Panc1 (cell line): ENCODE measurements at regions of chr3 and their contacts with region 1.

Region 1: DNA sequence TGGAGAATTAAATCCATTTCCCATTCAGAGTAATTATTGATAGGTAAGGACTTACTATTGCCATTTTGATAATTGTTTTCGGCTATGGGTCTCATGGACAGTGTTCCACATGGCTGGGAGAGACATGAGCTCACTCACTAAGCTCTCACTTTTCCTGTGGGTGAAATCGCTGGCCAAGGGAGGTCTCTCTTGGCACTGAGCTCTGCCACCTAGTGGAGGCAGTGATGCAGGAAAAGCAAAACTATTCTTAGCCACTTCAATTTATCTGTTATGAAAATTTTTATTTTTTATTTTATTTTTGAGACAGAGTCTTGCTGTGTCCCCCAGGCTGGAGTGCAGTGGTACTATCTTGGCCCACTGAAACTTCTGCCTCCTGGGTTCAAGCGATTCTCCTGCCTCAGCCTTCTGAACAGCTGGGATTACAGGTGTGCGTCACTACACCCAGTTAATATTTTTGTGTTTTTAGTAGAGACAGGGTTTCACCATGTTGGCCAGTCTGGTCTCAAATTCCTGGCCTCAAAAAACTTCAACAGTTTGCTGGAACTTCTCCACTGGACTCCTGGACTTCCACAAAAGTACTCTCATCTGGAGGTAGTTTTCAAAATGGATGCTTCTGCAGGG is 4.7 kb upstream of the RNF13 start:
- DNase-seq: peak; percentile 71
- ATAC-seq: peak; percentile 59
- H3K4me3 ChIP-seq: no peak overlapping the region
- H3K27ac ChIP-seq: no peak overlapping the region
- H3K4me1 ChIP-seq: peaks cover 12% of the 10 kb centered on the region
- H3K27me3 ChIP-seq: no peaks in the 10 kb centered on the region
- CTCF ChIP-seq: peak; percentile 97

Region 2: DNA sequence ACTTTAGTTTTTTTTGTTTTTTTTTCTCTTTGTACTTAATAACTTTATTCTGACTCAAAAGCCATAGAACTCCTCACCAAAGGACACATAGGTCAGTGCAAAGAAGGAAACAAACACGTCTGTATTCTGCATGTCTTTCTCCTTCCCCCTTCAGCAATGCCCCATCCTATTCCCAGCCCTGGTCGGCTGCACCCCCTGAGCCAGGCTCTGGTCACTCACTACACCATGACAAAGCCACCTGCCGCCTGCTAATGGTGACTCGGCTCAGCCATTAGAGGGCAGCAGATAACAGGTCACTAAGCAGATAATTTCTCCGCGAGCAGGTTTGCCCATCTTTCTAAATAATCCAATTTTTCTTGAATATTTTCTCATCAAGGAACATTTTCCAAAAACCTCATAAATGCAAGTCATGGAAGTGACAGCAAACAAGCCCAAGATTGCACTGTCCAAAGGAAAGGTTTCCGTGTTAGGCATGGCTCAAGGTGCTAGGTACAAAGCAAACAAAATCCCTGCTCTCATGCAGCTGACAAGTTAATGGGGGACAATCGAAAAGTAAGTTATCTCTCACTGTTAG is 296.0 kb before region 1 on chr3:
- CTCF ChIA-PET with region 1: interaction called, 3 read pairs
- POLR2A ChIA-PET with region 1: no interaction called
- in situ Hi-C with region 1: no loop called
- intact Hi-C with region 1: loop called (anchors 5 kb)
- DNase-seq: no peak
- ATAC-seq: peak; percentile 69
- H3K4me3 ChIP-seq: no peak overlapping the region
- H3K27ac ChIP-seq: peak overlapping the region; percentile 98
- H3K4me1 ChIP-seq: peaks cover 78% of the 10 kb centered on the region
- H3K27me3 ChIP-seq: no peaks in the 10 kb centered on the region
- CTCF ChIP-seq: peak; percentile 96

Region 3: GRCh38 chr3:149589332-149589731 is 219.0 kb before region 1 on chr3:
- CTCF ChIA-PET with region 1: interaction called, 11 read pairs
- POLR2A ChIA-PET with region 1: no interaction called
- in situ Hi-C with region 1: no loop called
- intact Hi-C with region 1: no loop called
- DNase-seq: no peak
- ATAC-seq: no peak
- H3K4me3 ChIP-seq: no peak overlapping the region
- H3K27ac ChIP-seq: peak overlapping the region; percentile 100
- H3K4me1 ChIP-seq: peaks cover 100% of the 10 kb centered on the region
- H3K27me3 ChIP-seq: no peaks in the 10 kb centered on the region
- CTCF ChIP-seq: no peak

Region 4: GRCh38 chr3:149646181-149646766 is 162.0 kb before region 1 on chr3:
- CTCF ChIA-PET with region 1: no interaction called
- POLR2A ChIA-PET with region 1: interaction called, 12 read pairs
- in situ Hi-C with region 1: no loop called
- intact Hi-C with region 1: no loop called
- DNase-seq: no peak
- ATAC-seq: peak; percentile 44; the same call in 1 of the 2 replicates
- H3K4me3 ChIP-seq: no peak overlapping the region
- H3K27ac ChIP-seq: peak overlapping the region; percentile 67
- H3K4me1 ChIP-seq: peaks cover 96% of the 10 kb centered on the region
- H3K27me3 ChIP-seq: no peaks in the 10 kb centered on the region
- CTCF ChIP-seq: no peak

Region 5: GRCh38 chr3:149765762-149766334 is 42.5 kb before region 1 on chr3:
- CTCF ChIA-PET with region 1: interaction called, 30 read pairs
- POLR2A ChIA-PET with region 1: interaction called, 5 read pairs
- in situ Hi-C with region 1: no loop called
- intact Hi-C with region 1: loop called (anchors 5 kb)
- DNase-seq: no peak
- ATAC-seq: peak; percentile 70; the same call in 1 of the 2 replicates
- H3K4me3 ChIP-seq: no peak overlapping the region
- H3K27ac ChIP-seq: no peak overlapping the region
- H3K4me1 ChIP-seq: no peaks in the 10 kb centered on the region
- H3K27me3 ChIP-seq: peaks cover 3% of the 10 kb centered on the region; the same call in 1 of the 2 replicates
- CTCF ChIP-seq: peak; percentile 66; the same call in 1 of the 2 replicates

Region 6: GRCh38 chr3:149771652-149772271 is 36.6 kb before region 1 on chr3:
- CTCF ChIA-PET with region 1: interaction called, 30 read pairs
- POLR2A ChIA-PET with region 1: interaction called, 5 read pairs
- in situ Hi-C with region 1: no loop called
- intact Hi-C with region 1: loop called (anchors 5 kb)
- DNase-seq: peak; percentile 32
- ATAC-seq: peak; percentile 89
- H3K4me3 ChIP-seq: no peak overlapping the region
- H3K27ac ChIP-seq: no peak overlapping the region
- H3K4me1 ChIP-seq: no peaks in the 10 kb centered on the region
- H3K27me3 ChIP-seq: no peaks in the 10 kb centered on the region
- CTCF ChIP-seq: peak; percentile 97

Region 7: DNA sequence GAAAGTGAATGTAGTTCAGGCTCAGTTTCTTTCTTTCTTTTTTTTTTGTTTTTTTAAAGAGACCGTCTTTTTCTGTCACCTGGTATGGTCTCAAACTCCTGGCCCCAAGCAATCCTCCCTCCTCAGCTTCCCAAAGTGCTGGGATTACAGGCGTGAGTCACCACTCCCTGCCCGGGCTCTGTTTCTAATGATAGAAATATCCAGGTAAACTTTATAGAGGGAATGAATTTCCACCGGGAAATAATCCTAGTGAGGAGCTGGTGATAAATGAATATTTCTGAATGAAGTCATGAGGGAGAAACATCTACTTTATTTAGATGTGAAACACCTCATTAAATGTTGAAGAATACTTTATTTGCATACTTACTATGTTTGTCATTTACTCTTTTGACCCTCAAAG is 11.9 kb after region 1 on chr3:
- CTCF ChIA-PET with region 1: interaction called, 10 read pairs
- POLR2A ChIA-PET with region 1: interaction called, 4 read pairs
- in situ Hi-C with region 1: no loop called
- intact Hi-C with region 1: no loop called
- DNase-seq: no peak
- ATAC-seq: no peak
- H3K4me3 ChIP-seq: no peak overlapping the region
- H3K27ac ChIP-seq: no peak overlapping the region
- H3K4me1 ChIP-seq: peaks cover 19% of the 10 kb centered on the region
- H3K27me3 ChIP-seq: no peaks in the 10 kb centered on the region
- CTCF ChIP-seq: no peak

Region 8: GRCh38 chr3:150049317-150049716 is 241.0 kb after region 1 on chr3:
- CTCF ChIA-PET with region 1: no interaction called
- POLR2A ChIA-PET with region 1: no interaction called
- in situ Hi-C with region 1: no loop called
- intact Hi-C with region 1: no loop called
- DNase-seq: no peak
- ATAC-seq: no peak
- H3K4me3 ChIP-seq: no peak overlapping the region
- H3K27ac ChIP-seq: no peak overlapping the region
- H3K4me1 ChIP-seq: no peaks in the 10 kb centered on the region
- H3K27me3 ChIP-seq: no peaks in the 10 kb centered on the region
- CTCF ChIP-seq: no peak